Spleen (tissue), 13 donors: ENCODE measurements at regions of chr11 and their contacts with region 1.

Region 1: DNA sequence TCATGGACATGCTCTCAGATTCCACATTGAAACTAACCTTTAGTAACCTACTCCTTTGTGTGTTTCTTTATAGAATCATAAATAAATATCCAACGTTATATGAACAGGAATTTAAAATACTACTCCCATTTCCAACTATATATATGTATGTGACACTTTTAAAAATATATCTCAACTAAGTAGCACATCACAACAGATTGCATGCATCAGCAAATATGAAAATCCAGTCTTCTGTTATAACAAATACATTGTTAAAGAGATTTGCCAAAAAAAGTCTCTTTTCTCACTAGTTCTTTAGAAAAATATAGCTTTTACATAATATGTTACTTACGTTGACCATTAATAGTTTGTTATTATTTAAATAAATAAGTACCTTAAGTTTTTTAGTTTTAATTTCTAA is 1608.6 kb upstream of the RAG2 start:
- DNase-seq: no peak
- H3K4me3 ChIP-seq: no peak overlapping the region
- H3K27ac ChIP-seq: no peak overlapping the region
- H3K4me1 ChIP-seq: no peaks in the 10 kb centered on the region
- H3K27me3 ChIP-seq: no peaks in the 10 kb centered on the region
- CTCF ChIP-seq: no peak
- POLR2A ChIP-seq: no peak

Region 2: DNA sequence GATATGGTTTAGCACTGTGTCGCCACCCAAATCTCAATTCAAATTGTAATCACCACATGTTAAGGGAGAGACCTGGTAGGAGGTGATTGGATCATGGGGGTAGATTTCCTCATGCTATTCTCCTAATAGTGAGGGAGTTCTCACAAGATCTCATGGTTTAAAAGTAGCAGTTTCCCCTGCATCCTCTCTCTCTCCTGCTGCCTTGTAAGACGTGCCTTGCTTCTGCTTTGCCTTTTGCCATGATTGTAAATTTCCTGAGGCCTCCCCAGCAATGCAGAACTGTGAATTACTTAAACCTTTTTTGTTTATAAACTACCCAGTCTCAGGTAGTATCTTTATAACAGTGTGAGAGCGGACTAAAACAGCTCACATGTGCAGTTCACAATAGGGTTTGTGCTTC is 60.0 kb after region 1 on chr11:
- intact Hi-C with region 1: loop called (anchors 10 kb)
- DNase-seq: no peak
- H3K4me3 ChIP-seq: no peak overlapping the region
- H3K27ac ChIP-seq: no peak overlapping the region
- H3K4me1 ChIP-seq: no peaks in the 10 kb centered on the region
- H3K27me3 ChIP-seq: no peaks in the 10 kb centered on the region
- CTCF ChIP-seq: no peak
- POLR2A ChIP-seq: no peak